ENCODE measurements at regions of chr11 and their contacts with region 1.

Region 1: DNA sequence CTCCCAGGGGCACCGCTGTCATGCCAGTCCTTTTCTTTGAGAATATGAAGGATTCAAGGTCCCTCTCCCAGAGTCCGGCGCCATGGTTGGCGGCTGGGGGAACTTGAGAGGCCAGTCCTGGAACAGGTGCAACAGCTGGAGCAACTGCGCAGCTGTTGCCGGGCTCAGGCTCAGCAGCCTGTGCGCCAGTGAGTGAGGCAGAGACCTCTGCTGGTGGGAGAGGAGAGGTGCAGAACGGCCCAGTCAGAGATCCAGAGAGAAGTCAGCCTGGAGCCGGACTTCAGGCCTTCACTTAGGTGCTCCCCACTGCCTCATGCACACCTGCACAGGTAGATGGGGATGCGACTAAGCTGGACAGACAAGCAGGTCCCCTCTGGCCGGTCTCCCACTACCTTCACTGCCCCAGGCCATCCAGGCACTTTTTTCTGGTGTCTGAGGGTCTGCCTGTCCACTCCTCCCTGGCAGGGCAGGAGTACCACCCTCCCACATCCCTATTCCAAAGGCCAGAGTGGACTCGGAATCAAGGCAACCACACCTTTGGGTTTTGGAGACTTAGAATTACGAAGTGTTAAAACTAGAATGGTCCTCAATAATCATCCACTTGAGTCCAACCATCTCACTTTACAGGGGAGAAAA is 4.6 kb downstream of the CHRDL2 start:
- DNase-seq: peak; percentile 81
- ATAC-seq: peak; percentile 93 to 95

Region 2: GRCh38 chr11:74543991-74544390 is 182.7 kb before region 1 on chr11:
- intact Hi-C with region 1: no loop called
- DNase-seq: no peak
- ATAC-seq: no peak

Region 3: GRCh38 chr11:74611369-74611861 is 115.2 kb before region 1 on chr11:
- intact Hi-C with region 1: loop called in 1 of 2 experiments (anchors 5 kb)
- DNase-seq: no peak
- ATAC-seq: peak; percentile 15 to 64

Region 4: DNA sequence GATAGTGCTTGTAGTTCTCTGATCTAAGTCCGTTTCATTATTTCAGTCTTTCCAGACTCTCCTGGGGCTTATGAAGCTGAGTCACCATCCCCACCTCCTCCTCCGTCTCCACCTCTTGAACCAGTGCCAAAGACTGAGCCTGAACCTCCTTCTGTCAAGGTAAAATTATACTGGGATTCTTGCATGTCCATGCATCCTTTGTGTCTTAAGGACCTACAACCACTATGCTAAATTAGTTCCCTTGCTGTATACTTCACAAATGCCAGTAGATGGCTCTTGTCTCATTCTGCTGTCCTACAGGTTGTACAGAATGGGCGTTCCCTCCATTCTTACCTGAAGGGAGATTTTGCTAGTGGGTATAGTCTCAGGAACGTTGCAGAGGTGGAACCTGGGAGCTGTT is 92.1 kb before region 1 on chr11:
- intact Hi-C with region 1: loop called (anchors 2 to 10 kb)
- DNase-seq: no peak
- ATAC-seq: peak in 1 of 2 donors; percentile 77